Sigmoid colon (tissue), 7 donors: ENCODE measurements at regions of chr1 and their contacts with region 1.

Region 1: GRCh38 chr1:7975212-7975865 is 13.8 kb downstream of the PARK7 start:
- DNase-seq: peak; percentile 85
- H3K4me3 ChIP-seq: no peak overlapping the region
- H3K27ac ChIP-seq: peak overlapping the region in 3 of 4 donors; percentile 50 to 71 (median 54)
- H3K4me1 ChIP-seq: peaks cover 0 to 16% (median 2%) of the 10 kb centered on the region in 4 donors
- H3K27me3 ChIP-seq: no peaks in the 10 kb centered on the region
- CTCF ChIP-seq: peak; percentile 81 to 89 (median 84)
- EP300 ChIP-seq: no peak
- POLR2A ChIP-seq: no peak

Region 2: DNA sequence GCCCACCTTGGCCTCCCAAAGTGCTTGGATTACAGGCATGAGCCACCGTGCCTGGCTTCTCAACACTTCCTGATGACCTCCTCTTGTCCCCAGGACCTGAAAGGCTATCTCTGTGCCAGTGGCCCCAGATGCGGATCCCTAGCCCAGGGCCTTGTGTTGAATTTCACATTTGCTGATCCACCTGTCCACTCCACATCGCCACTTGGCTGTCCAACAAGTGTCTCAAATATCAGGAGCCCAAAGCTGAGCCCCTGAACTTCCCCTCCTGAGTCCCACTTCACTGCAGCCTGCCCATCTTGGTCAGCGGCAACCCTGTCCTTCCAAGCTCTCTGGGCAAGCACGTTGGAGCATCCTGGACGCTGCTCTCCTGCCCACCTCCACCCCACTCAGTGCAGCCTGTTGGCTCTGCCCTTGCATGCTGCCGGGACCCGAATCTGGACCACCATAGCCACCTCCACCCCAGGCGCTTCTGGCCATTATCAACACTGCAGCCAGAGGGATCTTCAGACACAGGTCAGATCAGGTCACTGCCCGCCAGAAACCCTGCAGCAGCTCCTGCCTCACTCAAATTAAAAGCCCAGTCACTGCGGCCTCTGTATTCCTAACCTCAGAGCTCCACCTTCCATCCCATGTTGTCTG is 556.8 kb before region 1 on chr1:
- intact Hi-C with region 1: no loop called
- DNase-seq: peak; percentile 47
- H3K4me3 ChIP-seq: no peak overlapping the region
- H3K27ac ChIP-seq: no peak overlapping the region
- H3K4me1 ChIP-seq: no peaks in the 10 kb centered on the region
- H3K27me3 ChIP-seq: no peaks in the 10 kb centered on the region
- CTCF ChIP-seq: no peak
- EP300 ChIP-seq: no peak
- POLR2A ChIP-seq: no peak

Region 3: DNA sequence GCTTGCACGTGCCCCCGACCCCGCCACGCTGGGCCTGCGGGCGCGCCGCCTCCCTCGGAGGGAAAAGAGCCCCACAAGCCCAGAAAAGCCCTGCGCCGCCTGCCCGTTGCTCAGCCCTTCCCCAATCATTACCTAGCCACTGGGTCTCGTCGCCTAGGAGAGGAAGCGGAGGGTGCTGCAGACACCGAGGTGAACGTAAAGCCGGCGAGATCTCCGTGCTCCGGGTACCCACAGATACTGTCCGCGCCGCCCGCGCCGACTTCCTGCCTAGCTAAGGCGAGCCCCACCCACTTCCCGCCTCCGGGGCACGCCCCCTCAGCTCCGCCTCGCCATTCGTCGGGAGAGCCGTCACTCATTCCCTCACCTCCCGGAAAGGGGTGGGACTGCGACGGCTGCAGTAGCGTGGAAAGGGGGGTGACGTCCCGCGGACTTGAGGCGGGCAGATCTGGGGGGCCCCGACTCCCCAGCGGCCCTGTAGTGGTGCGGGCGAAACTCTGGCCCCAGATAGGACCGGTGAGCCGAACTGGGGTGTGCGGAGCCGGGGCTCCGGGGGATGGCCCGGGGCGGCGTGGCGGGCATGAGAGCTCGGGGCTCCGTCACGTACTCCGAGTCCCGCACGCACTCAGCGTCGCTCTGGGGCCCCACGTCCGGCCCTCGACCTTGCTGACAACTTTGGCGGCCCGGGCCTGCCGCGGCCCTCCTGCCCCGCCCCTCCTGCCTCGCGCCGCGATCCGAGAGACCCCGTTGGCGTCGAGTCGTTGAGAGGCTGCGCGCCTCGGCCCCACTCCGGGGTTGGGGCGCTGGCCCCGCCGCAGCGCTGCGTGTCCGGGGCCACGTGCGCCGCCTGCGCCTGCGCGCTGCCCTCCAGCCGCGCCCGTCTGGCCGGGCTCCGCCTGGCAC is 903.4 kb after region 1 on chr1 and contains the start of gene ENO1:
- intact Hi-C with region 1: loop called (anchors 10 kb)
- DNase-seq: peak; percentile 99
- H3K4me3 ChIP-seq: peak within 1 kb of the TSS; percentile 65 to 95 (median 83)
- H3K27ac ChIP-seq: peak within 1 kb of the TSS; percentile 94 to 100 (median 98)
- H3K4me1 ChIP-seq: peaks cover 0 to 57% (median 54%) of the 10 kb centered on the region in 4 donors
- H3K27me3 ChIP-seq: no peaks in the 10 kb centered on the region
- CTCF ChIP-seq: no peak
- EP300 ChIP-seq: peak in 1 of 4 donors; percentile 22
- POLR2A ChIP-seq: peak; percentile 96
- total RNA-seq, gene ENO1: 265 to 324 (median 300) TPM